ENCODE measurements at regions of chr3 and their contacts with region 1.

Region 1: GRCh38 chr3:183766745-183767606 is 58.4 kb downstream of the MAP6D1 start:
- DNase-seq: peak; percentile 65 to 81 (median 75)
- H3K4me3 ChIP-seq: no peak overlapping the region
- H3K27ac ChIP-seq: no peak overlapping the region
- H3K4me1 ChIP-seq: no peaks in the 10 kb centered on the region
- H3K27me3 ChIP-seq: no peaks in the 10 kb centered on the region

Region 2: GRCh38 chr3:183468424-183468823 is 298.6 kb before region 1 on chr3:
- CTCF ChIA-PET with region 1: interaction called, 12 read pairs
- POLR2A ChIA-PET with region 1: no interaction called
- DNase-seq: no peak
- H3K4me3 ChIP-seq: no peak overlapping the region
- H3K27ac ChIP-seq: no peak overlapping the region
- H3K4me1 ChIP-seq: peaks cover 0 to 4% (median 1%) of the 10 kb centered on the region in 4 experiments
- H3K27me3 ChIP-seq: no peaks in the 10 kb centered on the region

Region 3: GRCh38 chr3:183653209-183654064 is 113.5 kb before region 1 on chr3:
- CTCF ChIA-PET with region 1: no interaction called
- POLR2A ChIA-PET with region 1: no interaction called
- DNase-seq: peak; percentile 40 to 71 (median 70)
- H3K4me3 ChIP-seq: no peak overlapping the region
- H3K27ac ChIP-seq: no peak overlapping the region
- H3K4me1 ChIP-seq: no peaks in the 10 kb centered on the region
- H3K27me3 ChIP-seq: no peaks in the 10 kb centered on the region

Region 4: GRCh38 chr3:183779896-183780465 is 13.0 kb after region 1 on chr3:
- CTCF ChIA-PET with region 1: interaction called, 21 read pairs
- POLR2A ChIA-PET with region 1: interaction called, 3 read pairs
- DNase-seq: peak in 2 of 3 donors; percentile 28 to 30
- H3K4me3 ChIP-seq: no peak overlapping the region
- H3K27ac ChIP-seq: no peak overlapping the region
- H3K4me1 ChIP-seq: peaks cover 0 to 9% (median 3%) of the 10 kb centered on the region in 4 experiments
- H3K27me3 ChIP-seq: no peaks in the 10 kb centered on the region

Measured in common myeloid progenitor, CD34-positive (primary cell).